ENCODE measurements at regions of chr17 and their contacts with region 1.

Region 1: GRCh38 chr17:2828397-2829038 is 32.3 kb downstream of the RAP1GAP2 start:
- DNase-seq: peak; percentile 87
- ATAC-seq: peak; percentile 75
- H3K4me3 ChIP-seq: peak overlapping the region in 1 of 5 experiments; percentile 29
- H3K4me3 Mint-ChIP-seq: no peak overlapping the region
- H3K27ac ChIP-seq: no peak overlapping the region
- H3K27ac Mint-ChIP-seq: peak overlapping the region; percentile 39
- H3K4me1 ChIP-seq: peaks cover 20 to 40% of the 10 kb centered on the region in 2 donors
- H3K4me1 Mint-ChIP-seq: peaks cover 33% of the 10 kb centered on the region
- H3K27me3 ChIP-seq: peaks cover 0 to 22% (median 1%) of the 10 kb centered on the region in 4 experiments
- H3K27me3 Mint-ChIP-seq: peaks cover 2% of the 10 kb centered on the region
- CTCF ChIP-seq: peak; percentile 93

Region 2: GRCh38 chr17:2711601-2712299 is 116.8 kb before region 1 on chr17 and contains the start of gene CLUH:
- CTCF ChIA-PET with region 1: no interaction called
- POLR2A ChIA-PET with region 1: no interaction called
- intact Hi-C with region 1: loop called (anchors 5 kb)
- DNase-seq: peak; percentile 98
- ATAC-seq: peak; percentile 88
- H3K4me3 ChIP-seq: peak within 1 kb of the TSS; percentile 22 to 95 (median 58)
- H3K4me3 Mint-ChIP-seq: peak within 1 kb of the TSS; percentile 93
- H3K27ac ChIP-seq: peak within 1 kb of the TSS; percentile 46 to 69
- H3K27ac Mint-ChIP-seq: peak within 1 kb of the TSS; percentile 90
- H3K4me1 ChIP-seq: peaks cover 29 to 50% of the 10 kb centered on the region in 2 donors
- H3K4me1 Mint-ChIP-seq: peaks cover 39% of the 10 kb centered on the region
- H3K27me3 ChIP-seq: no peaks in the 10 kb centered on the region
- H3K27me3 Mint-ChIP-seq: no peaks in the 10 kb centered on the region
- CTCF ChIP-seq: no peak
- total RNA-seq, gene CLUH: 53.1 and 78.8 TPM in 2 replicates

Region 3: GRCh38 chr17:2735896-2736295 is 92.6 kb before region 1 on chr17:
- CTCF ChIA-PET with region 1: no interaction called
- POLR2A ChIA-PET with region 1: no interaction called
- intact Hi-C with region 1: no loop called
- DNase-seq: no peak
- ATAC-seq: no peak
- H3K4me3 ChIP-seq: no peak overlapping the region
- H3K4me3 Mint-ChIP-seq: no peak overlapping the region
- H3K27ac ChIP-seq: no peak overlapping the region
- H3K27ac Mint-ChIP-seq: no peak overlapping the region
- H3K4me1 ChIP-seq: no peaks in the 10 kb centered on the region
- H3K4me1 Mint-ChIP-seq: no peaks in the 10 kb centered on the region
- H3K27me3 ChIP-seq: peaks cover 0 to 13% (median 0%) of the 10 kb centered on the region in 4 experiments
- H3K27me3 Mint-ChIP-seq: peaks cover 11% of the 10 kb centered on the region
- CTCF ChIP-seq: no peak

Region 4: GRCh38 chr17:2786176-2786881 is 42.2 kb before region 1 on chr17:
- CTCF ChIA-PET with region 1: interaction called, 112 read pairs
- POLR2A ChIA-PET with region 1: interaction called, 3 read pairs
- intact Hi-C with region 1: loop called (anchors 1 kb)
- DNase-seq: peak; percentile 95
- ATAC-seq: peak; percentile 99
- H3K4me3 ChIP-seq: no peak overlapping the region
- H3K4me3 Mint-ChIP-seq: peak overlapping the region; percentile 44
- H3K27ac ChIP-seq: no peak overlapping the region
- H3K27ac Mint-ChIP-seq: peak overlapping the region; percentile 41
- H3K4me1 ChIP-seq: peaks cover 18 to 29% of the 10 kb centered on the region in 2 donors
- H3K4me1 Mint-ChIP-seq: peaks cover 19% of the 10 kb centered on the region
- H3K27me3 ChIP-seq: peaks cover 0 to 15% (median 4%) of the 10 kb centered on the region in 4 experiments
- H3K27me3 Mint-ChIP-seq: no peaks in the 10 kb centered on the region
- CTCF ChIP-seq: peak; percentile 89

Region 5: DNA sequence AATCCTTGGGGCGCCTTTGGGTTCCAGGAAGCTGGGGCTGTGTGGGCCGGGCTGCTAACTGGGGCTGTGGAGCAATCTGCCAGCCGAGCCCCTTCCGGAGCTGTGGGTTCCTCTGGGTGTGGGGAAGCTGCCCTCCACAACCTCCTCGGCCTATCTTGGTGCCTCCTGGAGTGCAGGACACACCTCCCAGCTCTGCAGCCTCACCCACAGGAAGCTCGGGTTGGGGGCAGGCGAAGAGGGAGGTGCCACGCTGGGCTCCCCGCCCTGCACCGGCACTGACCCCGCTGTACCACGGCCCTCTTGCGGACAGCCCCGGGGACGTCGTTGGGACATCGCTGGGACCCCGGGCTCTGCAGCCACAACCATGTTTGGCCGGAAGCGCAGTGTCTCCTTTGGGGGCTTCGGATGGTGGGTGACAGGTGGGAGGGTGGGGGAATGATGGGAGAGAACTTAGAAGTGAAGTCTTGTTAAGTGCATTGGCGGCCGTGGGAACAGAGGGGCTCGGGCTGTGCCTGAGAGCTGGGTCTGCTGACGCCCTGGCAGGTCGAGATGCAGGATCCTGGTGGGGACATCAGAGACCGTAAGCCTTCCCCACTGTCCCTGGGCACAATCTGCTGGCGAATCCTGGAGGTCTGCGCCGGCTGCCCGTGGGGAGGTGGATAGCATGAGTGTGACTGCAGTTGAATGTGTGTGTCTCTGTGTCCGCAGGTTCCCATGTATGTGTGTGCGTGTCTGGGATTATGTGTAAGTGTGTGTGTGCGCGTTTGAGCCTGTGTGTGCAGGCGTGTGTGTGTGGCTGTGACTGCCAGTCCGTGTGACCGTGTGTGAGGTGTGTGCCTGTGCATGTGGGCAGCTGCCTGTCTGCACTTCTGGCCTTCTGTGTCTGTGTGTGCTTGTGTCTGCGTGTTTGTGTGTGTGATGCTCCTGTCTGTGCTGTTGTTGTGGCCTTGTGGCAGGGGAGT is 32.1 kb before region 1 on chr17 and contains the start of gene RAP1GAP2:
- CTCF ChIA-PET with region 1: interaction called, 112 read pairs
- POLR2A ChIA-PET with region 1: no interaction called
- intact Hi-C with region 1: no loop called
- DNase-seq: peak; percentile 65
- ATAC-seq: peak; percentile 78
- H3K4me3 ChIP-seq: peak within 1 kb of the TSS; percentile 43 to 78 (median 62)
- H3K4me3 Mint-ChIP-seq: peak within 1 kb of the TSS; percentile 96
- H3K27ac ChIP-seq: peak within 1 kb of the TSS; percentile 7 to 33
- H3K27ac Mint-ChIP-seq: peak within 1 kb of the TSS; percentile 91
- H3K4me1 ChIP-seq: peaks cover 56 to 75% of the 10 kb centered on the region in 2 donors
- H3K4me1 Mint-ChIP-seq: peaks cover 71% of the 10 kb centered on the region
- H3K27me3 ChIP-seq: no peaks in the 10 kb centered on the region
- H3K27me3 Mint-ChIP-seq: no peaks in the 10 kb centered on the region
- CTCF ChIP-seq: no peak
- total RNA-seq, gene RAP1GAP2: 13.4 and 14.9 TPM in 2 replicates

Region 6: DNA sequence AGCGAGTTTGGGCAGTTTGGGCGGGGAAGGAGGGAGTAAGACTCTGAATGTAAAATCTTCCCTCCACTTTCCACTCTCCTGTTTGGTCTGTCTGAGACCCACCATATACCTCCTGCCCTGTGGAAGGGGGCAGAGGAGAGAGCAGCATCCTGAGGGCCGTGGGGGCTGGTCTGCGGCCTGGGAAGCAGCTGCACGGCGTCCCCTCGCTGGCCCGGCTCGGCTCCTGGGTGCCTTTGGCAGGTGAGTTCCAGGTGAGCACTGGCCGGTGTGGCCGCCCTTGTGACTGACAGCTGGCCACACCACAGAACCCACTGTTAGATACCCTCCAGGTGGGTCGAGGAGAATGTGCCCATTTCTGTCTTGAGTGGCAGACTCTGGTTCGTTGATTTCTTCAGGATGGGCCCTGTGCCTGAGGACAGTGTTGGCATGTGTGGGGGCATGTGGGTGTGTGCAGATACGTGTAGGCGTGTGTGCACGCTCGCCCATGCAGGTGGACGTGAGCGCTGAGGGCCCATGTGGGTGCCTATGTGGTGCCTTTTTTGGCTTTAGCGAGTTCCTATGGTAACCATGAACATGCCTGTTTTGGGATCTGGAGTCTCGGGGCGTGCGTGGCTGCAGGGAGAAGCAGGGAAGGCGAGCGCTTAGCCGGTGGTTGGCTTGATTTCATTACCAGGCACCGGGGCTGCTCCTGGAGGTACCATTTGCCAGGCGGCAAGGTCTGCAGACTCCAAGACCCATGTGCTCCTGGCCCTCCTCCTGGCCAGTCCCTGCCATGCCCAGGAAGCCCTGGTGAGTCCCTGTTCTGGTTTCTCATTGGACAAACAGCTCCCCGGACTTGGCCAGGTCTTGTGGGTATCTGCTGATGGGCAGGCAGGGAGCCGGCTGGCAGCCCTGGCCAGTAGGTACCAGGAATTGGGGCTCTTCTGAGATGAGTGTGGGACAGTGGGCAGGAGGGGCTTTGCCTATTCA is 19.9 kb before region 1 on chr17:
- CTCF ChIA-PET with region 1: interaction called, 59 read pairs
- POLR2A ChIA-PET with region 1: interaction called, 16 read pairs
- intact Hi-C with region 1: no loop called
- DNase-seq: no peak
- ATAC-seq: no peak
- H3K4me3 ChIP-seq: no peak overlapping the region
- H3K4me3 Mint-ChIP-seq: no peak overlapping the region
- H3K27ac ChIP-seq: no peak overlapping the region
- H3K27ac Mint-ChIP-seq: peak overlapping the region; percentile 15
- H3K4me1 ChIP-seq: peaks cover 0 to 13% of the 10 kb centered on the region in 2 donors
- H3K4me1 Mint-ChIP-seq: peaks cover 29% of the 10 kb centered on the region
- H3K27me3 ChIP-seq: no peaks in the 10 kb centered on the region
- H3K27me3 Mint-ChIP-seq: no peaks in the 10 kb centered on the region
- CTCF ChIP-seq: no peak

Region 7: GRCh38 chr17:2814481-2815341 is 13.8 kb before region 1 on chr17:
- CTCF ChIA-PET with region 1: interaction called, 59 read pairs
- POLR2A ChIA-PET with region 1: interaction called, 16 read pairs
- intact Hi-C with region 1: loop called (anchors 1 kb)
- DNase-seq: peak; percentile 95
- ATAC-seq: peak; percentile 82
- H3K4me3 ChIP-seq: peak overlapping the region in 4 of 5 experiments; percentile 39 to 70 (median 57)
- H3K4me3 Mint-ChIP-seq: peak overlapping the region; percentile 75
- H3K27ac ChIP-seq: peak overlapping the region; percentile 69 to 79
- H3K27ac Mint-ChIP-seq: peak overlapping the region; percentile 93
- H3K4me1 ChIP-seq: peaks cover 24 to 55% of the 10 kb centered on the region in 2 donors
- H3K4me1 Mint-ChIP-seq: peaks cover 44% of the 10 kb centered on the region
- H3K27me3 ChIP-seq: no peaks in the 10 kb centered on the region
- H3K27me3 Mint-ChIP-seq: no peaks in the 10 kb centered on the region
- CTCF ChIP-seq: no peak

Region 8: DNA sequence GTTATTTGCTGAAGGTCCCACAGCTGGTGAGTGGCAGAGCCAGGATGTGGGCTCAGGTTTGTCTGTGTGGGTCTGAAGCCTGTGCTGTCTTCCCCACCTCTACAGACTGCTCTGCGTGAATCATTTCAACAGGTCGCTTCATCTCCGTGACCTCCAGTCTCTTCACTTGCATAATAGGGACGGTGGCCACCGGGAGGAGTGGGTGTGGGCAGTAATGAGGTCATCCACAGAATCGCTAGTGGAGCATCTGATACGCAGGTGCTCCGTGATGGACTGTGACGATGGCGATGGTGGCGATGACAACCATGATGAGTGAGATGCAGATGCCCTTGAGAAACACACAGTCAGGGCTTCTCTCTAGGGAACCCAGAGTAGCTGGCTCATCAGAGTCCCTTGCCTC is 87.9 kb after region 1 on chr17:
- CTCF ChIA-PET with region 1: no interaction called
- POLR2A ChIA-PET with region 1: no interaction called
- intact Hi-C with region 1: no loop called
- DNase-seq: no peak
- ATAC-seq: no peak
- H3K4me3 ChIP-seq: no peak overlapping the region
- H3K4me3 Mint-ChIP-seq: no peak overlapping the region
- H3K27ac ChIP-seq: no peak overlapping the region
- H3K27ac Mint-ChIP-seq: no peak overlapping the region
- H3K4me1 ChIP-seq: no peaks in the 10 kb centered on the region
- H3K4me1 Mint-ChIP-seq: no peaks in the 10 kb centered on the region
- H3K27me3 ChIP-seq: no peaks in the 10 kb centered on the region
- H3K27me3 Mint-ChIP-seq: no peaks in the 10 kb centered on the region
- CTCF ChIP-seq: no peak

Measured in B cell (primary cell).